Naive thymus-derived CD4-positive, alpha-beta T cell (primary cell): ENCODE measurements at regions of chr11 and their contacts with region 1.

Region 1: DNA sequence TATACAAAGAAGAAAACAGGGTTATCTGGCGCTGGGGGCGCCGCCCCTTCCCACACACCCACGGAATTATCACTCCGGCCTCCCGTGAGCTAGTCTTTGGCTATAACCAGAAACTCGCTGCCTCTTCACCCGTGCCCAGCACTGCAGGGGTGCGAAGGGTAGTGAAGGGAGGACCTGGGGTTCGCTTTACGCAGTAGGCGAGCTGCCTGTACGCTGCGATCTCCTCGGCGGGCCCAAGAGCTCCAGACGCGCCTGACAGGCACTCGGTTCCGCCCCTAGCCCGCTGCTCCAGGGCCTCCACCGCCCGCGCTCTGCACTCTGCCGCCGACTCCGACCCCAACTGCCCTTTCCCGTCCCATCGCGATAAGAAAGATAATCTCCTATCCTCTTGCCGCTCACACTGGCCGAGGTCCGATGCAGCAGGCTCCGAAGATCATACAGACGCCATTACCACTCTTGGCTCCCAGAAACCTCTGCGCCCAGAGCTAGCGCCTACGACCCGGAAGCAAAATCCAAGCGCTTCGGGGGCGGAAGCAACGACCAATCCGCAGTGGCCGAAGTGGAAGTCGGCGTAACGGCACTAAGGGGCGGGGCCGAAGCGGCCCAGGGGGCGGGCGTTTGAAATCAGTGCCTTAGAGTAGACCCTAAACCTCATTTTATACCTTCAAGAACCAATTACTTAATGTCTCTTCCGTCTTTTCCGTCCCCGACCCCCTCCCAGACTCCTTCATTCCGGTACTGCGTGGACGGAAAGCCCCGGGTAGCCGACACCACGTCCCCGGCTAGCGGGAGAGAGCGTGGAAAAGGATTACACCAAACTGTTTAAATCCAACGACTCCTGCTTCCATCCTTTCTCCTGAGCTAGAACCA is at the starts of genes CWC15 and KDM4D:
- DNase-seq: peak; percentile 84 to 94 (median 92)
- ATAC-seq: peak; percentile 100
- H3K4me3 ChIP-seq: peak within 1 kb of the TSS; percentile 81
- H3K4me3 Mint-ChIP-seq: peak within 1 kb of the TSS; percentile 88 to 100 (median 96)
- H3K27ac ChIP-seq: peak within 1 kb of the TSS; percentile 91
- H3K27ac Mint-ChIP-seq: peak within 1 kb of the TSS; percentile 92 to 100 (median 96)
- H3K4me1 ChIP-seq: peaks cover 9 to 13% of the 10 kb centered on the region in 2 donors
- H3K4me1 Mint-ChIP-seq: peaks cover 17 to 63% (median 39%) of the 10 kb centered on the region in 7 donors
- H3K27me3 ChIP-seq: no peaks in the 10 kb centered on the region
- H3K27me3 Mint-ChIP-seq: no peaks in the 10 kb centered on the region
- total RNA-seq, gene CWC15: 64.1 to 94.7 (median 66.8) TPM
- total RNA-seq, gene KDM4D: 0.32 to 0.70 (median 0.68) TPM

Region 2: DNA sequence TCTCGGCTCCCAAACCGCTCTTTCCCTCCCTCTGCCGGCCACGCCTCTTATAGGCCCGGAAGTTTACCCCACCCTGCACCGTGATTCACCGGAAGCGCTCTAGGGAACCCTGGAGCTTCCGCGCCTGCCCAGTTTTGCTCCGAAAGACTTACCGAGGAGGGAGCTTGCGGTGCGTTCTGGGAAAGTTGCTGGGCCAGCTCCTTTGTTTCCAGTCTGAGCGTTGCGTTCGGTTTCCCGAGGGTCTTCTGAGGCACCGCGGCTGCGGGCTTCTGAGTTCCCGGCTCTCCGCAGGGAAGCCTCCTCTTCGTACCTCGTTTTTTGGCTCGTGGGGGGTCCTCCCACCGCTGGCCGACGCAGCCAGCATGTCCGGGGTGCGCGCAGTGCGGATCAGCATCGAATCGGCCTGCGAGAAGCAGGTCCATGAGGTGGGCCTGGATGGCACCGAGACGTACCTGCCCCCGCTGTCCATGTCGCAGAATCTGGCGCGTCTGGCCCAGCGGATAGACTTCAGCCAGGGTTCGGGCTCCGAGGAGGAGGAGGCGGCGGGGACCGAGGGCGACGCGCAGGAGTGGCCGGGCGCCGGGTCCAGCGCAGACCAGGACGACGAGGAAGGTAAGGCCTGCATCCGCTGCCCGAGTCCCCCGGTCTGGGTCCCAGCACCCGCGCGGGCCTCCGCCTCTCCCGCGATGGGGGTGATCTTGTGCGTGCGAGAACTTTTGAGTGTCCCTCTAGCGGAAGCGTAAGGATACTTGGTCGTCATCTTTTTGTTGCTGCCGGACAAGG is 1189.0 kb before region 1 on chr11 and contains the start of gene MED17:
- CTCF ChIA-PET with region 1: no interaction called
- POLR2A ChIA-PET with region 1: no interaction called
- intact Hi-C with region 1: loop called (anchors 1 to 5 kb)
- DNase-seq: peak; percentile 64 to 87 (median 85)
- ATAC-seq: peak; percentile 97
- H3K4me3 ChIP-seq: peak within 1 kb of the TSS; percentile 77
- H3K4me3 Mint-ChIP-seq: peak within 1 kb of the TSS; percentile 93 to 100 (median 96)
- H3K27ac ChIP-seq: peak within 1 kb of the TSS; percentile 94
- H3K27ac Mint-ChIP-seq: peak within 1 kb of the TSS; percentile 81 to 97 (median 93)
- H3K4me1 ChIP-seq: peaks cover 22 to 37% of the 10 kb centered on the region in 2 donors
- H3K4me1 Mint-ChIP-seq: peaks cover 34 to 58% (median 48%) of the 10 kb centered on the region in 7 donors
- H3K27me3 ChIP-seq: no peaks in the 10 kb centered on the region
- H3K27me3 Mint-ChIP-seq: no peaks in the 10 kb centered on the region
- total RNA-seq, gene MED17: 47.7 to 75.9 (median 65.6) TPM

Region 3: DNA sequence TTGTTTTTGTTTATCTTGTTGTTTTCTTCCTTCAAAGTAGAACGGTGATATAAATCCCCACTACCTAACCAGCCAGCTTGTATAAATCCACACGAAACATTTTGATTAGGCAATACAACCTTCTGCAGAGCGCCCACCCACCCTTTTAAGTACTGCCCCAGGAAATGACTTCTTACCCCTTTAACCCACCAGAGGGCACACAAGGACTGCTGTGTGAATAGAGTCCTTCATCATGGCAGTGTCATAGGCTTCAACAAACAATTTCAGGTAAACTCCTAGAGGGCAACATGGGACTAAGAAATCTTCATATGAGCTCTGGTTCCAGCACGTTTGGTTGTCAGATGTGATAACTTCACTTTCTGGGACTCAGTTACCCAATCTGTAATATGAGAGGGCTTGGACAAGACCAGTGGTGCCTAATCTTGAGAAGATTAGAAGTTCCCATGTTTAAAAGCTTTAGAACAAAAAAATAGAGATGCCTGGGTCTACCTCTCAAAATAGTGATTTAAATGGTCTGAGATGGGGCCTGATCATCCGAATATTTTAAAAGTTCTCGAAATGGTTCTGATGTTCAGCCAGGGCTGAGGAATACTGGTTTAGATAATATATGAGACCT is 350.1 kb before region 1 on chr11:
- CTCF ChIA-PET with region 1: no interaction called
- POLR2A ChIA-PET with region 1: no interaction called
- intact Hi-C with region 1: loop called (anchors 1 to 5 kb)
- DNase-seq: peak in 8 of 9 donors; percentile 33 to 68 (median 55)
- ATAC-seq: peak; percentile 91
- H3K4me3 ChIP-seq: no peak overlapping the region
- H3K4me3 Mint-ChIP-seq: no peak overlapping the region
- H3K27ac ChIP-seq: no peak overlapping the region
- H3K27ac Mint-ChIP-seq: peak overlapping the region in 1 of 9 donors; percentile 2
- H3K4me1 ChIP-seq: no peaks in the 10 kb centered on the region
- H3K4me1 Mint-ChIP-seq: peaks cover 0 to 2% (median 0%) of the 10 kb centered on the region in 7 donors
- H3K27me3 ChIP-seq: no peaks in the 10 kb centered on the region
- H3K27me3 Mint-ChIP-seq: peaks cover 5 to 18% (median 13%) of the 10 kb centered on the region in 5 donors

Region 4: GRCh38 chr11:95089620-95090542 is 116.5 kb after region 1 on chr11 and contains the start of gene ENDOD1:
- CTCF ChIA-PET with region 1: no interaction called
- POLR2A ChIA-PET with region 1: interaction called, 19 read pairs
- intact Hi-C with region 1: loop called (anchors 1 kb)
- DNase-seq: peak; percentile 81 to 89 (median 87)
- ATAC-seq: peak; percentile 98
- H3K4me3 ChIP-seq: peak within 1 kb of the TSS; percentile 79
- H3K4me3 Mint-ChIP-seq: peak within 1 kb of the TSS; percentile 86 to 95 (median 92)
- H3K27ac ChIP-seq: peak within 1 kb of the TSS; percentile 87
- H3K27ac Mint-ChIP-seq: peak within 1 kb of the TSS; percentile 96 to 99 (median 98)
- H3K4me1 ChIP-seq: peaks cover 16 to 31% of the 10 kb centered on the region in 2 donors
- H3K4me1 Mint-ChIP-seq: peaks cover 24 to 61% (median 49%) of the 10 kb centered on the region in 7 donors
- H3K27me3 ChIP-seq: no peaks in the 10 kb centered on the region
- H3K27me3 Mint-ChIP-seq: no peaks in the 10 kb centered on the region
- total RNA-seq, gene ENDOD1: 4.7 to 23.2 (median 8.6) TPM

Region 5: GRCh38 chr11:95705485-95706124 is 732.3 kb after region 1 on chr11:
- CTCF ChIA-PET with region 1: no interaction called
- POLR2A ChIA-PET with region 1: no interaction called
- intact Hi-C with region 1: loop called in 1 of 2 experiments (anchors 5 kb)
- DNase-seq: peak; percentile 67 to 91 (median 86)
- ATAC-seq: peak; percentile 98
- H3K4me3 ChIP-seq: no peak overlapping the region
- H3K4me3 Mint-ChIP-seq: no peak overlapping the region
- H3K27ac ChIP-seq: peak overlapping the region; percentile 55
- H3K27ac Mint-ChIP-seq: no peak overlapping the region
- H3K4me1 ChIP-seq: peaks cover 29 to 43% of the 10 kb centered on the region in 2 donors
- H3K4me1 Mint-ChIP-seq: peaks cover 3 to 15% (median 11%) of the 10 kb centered on the region in 7 donors
- H3K27me3 ChIP-seq: no peaks in the 10 kb centered on the region
- H3K27me3 Mint-ChIP-seq: peaks cover 0 to 3% (median 0%) of the 10 kb centered on the region in 5 donors

Region 6: GRCh38 chr11:96424693-96425092 is 1451.4 kb after region 1 on chr11:
- CTCF ChIA-PET with region 1: no interaction called
- POLR2A ChIA-PET with region 1: no interaction called
- intact Hi-C with region 1: loop called in 1 of 2 experiments (anchors 5 kb)
- DNase-seq: no peak
- ATAC-seq: no peak
- H3K4me3 ChIP-seq: no peak overlapping the region
- H3K4me3 Mint-ChIP-seq: no peak overlapping the region
- H3K27ac ChIP-seq: no peak overlapping the region
- H3K27ac Mint-ChIP-seq: no peak overlapping the region
- H3K4me1 ChIP-seq: no peaks in the 10 kb centered on the region
- H3K4me1 Mint-ChIP-seq: peaks cover 0 to 6% (median 0%) of the 10 kb centered on the region in 7 donors
- H3K27me3 ChIP-seq: peaks cover 0 to 3% of the 10 kb centered on the region in 2 donors
- H3K27me3 Mint-ChIP-seq: peaks cover 27 to 49% (median 44%) of the 10 kb centered on the region in 5 donors